Posterior cingulate gyrus (tissue), 11 donors: ENCODE measurements at regions of chr1 and their contacts with region 1.

Region 1: DNA sequence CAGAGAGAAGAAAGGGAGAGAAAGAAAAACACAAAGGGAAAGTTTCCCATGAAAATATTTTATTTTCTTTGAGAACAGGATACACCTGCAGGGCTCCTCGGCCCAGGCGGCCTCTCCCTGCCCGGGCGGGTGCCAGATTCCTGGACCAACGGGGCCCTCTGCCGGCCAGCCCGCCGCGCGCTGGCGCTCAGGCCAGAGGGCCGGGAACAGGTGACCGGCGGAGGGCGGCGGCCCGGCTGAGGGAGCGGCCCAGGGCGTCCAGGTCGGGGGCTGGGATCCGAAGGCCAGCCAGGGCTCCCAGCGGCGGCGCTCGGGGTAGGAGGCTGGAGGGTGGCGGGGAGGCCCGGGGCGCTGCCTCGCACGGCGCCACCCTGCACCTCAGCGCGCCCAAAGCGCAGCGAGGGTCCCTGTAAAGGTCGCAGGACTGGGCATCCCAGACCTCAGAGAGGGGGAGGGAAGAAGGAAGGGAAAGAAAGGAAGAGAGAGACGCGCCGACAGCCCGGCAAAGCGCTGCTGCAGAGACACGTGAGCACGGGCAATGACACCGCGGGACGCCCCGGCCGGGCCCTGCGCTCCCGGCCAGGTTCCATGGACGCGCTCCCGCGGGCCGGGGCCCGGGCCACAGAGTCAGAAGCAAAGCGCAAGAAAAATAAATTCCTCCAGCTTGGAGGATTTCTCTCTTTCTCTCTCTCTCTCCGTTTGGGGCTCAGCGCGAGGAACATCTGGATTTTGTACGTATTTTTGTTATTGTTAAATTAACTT is 927 bp downstream of the WNT9A start:
- DNase-seq: peak in 9 of 10 donors; percentile 58 to 95 (median 74)

Region 2: GRCh38 chr1:227486559-227486958 is 460.2 kb before region 1 on chr1:
- intact Hi-C with region 1: loop called (anchors 2 kb)
- DNase-seq: no peak

Region 3: DNA sequence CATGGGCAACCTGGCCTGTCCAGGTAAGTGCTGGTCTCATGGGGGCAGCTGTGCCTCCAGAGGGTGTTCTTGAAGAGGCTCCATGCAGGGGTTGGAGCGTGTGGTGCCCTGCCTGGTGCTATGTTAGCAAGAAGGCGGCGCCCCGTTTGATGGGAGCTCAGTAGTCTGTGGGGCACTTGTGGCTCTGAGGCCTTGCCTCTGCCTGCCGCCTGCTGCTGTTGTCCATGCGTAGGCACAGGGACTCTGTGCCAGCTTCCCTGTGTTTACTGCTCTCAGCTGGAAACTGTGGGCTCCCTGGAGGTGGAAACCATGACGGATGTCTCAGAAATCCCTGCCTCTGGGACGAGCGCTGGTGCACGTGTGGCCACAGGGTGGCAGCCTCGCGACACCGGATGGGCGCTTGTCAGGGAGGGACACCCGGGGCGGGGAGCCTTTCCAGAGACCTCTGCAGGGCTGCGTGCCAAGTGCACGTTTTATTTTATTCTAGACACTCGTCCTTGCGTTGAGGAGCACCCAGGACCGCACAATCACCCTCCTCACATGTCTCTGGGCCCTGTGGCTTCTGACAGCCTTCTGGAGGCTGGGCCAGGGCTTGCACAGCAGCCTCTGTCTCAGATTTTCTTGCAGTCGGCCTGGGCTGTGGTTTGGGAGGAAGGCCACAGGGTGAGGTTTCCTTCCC is 184.4 kb before region 1 on chr1:
- intact Hi-C with region 1: loop called (anchors 1 kb)
- DNase-seq: peak; percentile 76 to 98 (median 86)

Region 4: DNA sequence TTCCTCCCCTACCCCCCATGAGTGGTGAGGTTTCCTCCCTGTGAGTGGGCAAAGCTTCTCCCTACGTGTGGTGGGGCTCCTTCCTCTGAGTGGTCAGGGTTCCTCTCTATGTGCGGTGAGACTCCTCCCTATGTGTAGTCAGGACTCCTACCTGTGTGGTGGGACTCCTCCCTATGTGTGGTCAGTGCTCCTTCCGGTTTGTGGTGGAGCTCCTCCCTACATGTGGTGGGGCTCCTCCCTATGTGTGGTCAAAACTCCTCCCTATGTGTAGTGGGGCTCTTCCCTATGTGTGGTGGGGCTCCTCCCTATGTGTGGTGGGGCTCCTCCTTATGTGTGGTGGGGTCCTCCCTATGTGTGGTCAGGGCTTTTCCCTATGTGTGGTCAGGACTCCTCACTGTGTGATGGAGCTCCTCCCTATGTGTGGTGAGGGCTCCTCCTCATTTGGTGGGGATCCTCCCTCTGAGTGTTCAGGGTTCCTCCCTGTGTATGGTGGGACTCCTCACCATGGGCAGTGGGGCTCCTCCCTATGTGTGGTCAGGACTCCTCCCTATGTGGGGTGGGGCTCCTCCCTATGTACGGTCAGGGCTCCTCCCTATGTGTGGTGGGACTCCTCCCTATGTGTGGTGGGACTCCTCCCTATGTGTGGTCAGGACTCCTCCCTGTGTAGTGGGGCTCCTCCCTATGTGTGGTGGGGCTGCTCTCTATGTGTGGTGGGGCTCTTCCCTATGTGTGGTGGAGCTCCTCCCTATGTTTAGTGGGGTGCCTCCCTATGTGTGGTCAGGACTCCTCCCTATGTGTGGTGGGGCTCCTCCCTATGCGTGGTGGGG is 102.3 kb before region 1 on chr1:
- intact Hi-C with region 1: loop called (anchors 5 kb)
- DNase-seq: no peak